ENCODE measurements at regions of chr2 and their contacts with region 1.

Region 1: DNA sequence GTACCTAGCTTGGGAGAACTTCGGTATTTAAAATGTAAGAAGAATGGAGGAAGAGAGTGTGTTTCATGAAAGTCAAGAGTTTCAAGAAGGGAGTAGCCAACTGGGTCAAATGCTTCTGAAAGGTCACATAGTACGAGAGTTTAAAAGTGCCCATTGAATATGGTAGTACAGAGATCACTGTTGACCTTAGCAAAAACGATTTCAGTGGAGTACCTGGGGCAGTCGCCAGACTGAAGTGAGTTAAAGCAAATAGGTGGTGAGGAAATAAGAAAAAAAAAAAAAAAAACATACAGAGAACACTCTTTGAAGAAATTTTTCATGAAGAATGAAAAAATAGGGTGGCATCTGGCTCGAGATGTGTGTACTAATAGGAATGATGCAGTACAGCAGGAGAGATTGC is 11.5 kb downstream of the LIPT1 start:
- DNase-seq: no peak
- ATAC-seq: no peak
- H3K4me3 ChIP-seq: no peak overlapping the region
- H3K4me3 Mint-ChIP-seq: no peak overlapping the region
- H3K27ac ChIP-seq: no peak overlapping the region
- H3K27ac Mint-ChIP-seq: peak overlapping the region in 5 of 9 donors; percentile 4 to 77 (median 37)
- H3K4me1 ChIP-seq: no peaks in the 10 kb centered on the region
- H3K4me1 Mint-ChIP-seq: peaks cover 1 to 11% (median 7%) of the 10 kb centered on the region in 7 donors
- H3K27me3 ChIP-seq: no peaks in the 10 kb centered on the region
- H3K27me3 Mint-ChIP-seq: no peaks in the 10 kb centered on the region

Region 2: GRCh38 chr2:99154643-99155536 is 11.3 kb before region 1 on chr2 and contains the starts of genes LIPT1 and TSGA10:
- CTCF ChIA-PET with region 1: no interaction called
- POLR2A ChIA-PET with region 1: interaction called, 10 read pairs
- intact Hi-C with region 1: loop called in 1 of 2 experiments (anchors 1 kb)
- DNase-seq: peak; percentile 80 to 95 (median 92)
- ATAC-seq: peak; percentile 98
- H3K4me3 ChIP-seq: peak within 1 kb of the TSS; percentile 83
- H3K4me3 Mint-ChIP-seq: peak within 1 kb of the TSS in 1 of 10 donors; percentile 93
- H3K27ac ChIP-seq: peak within 1 kb of the TSS; percentile 92
- H3K27ac Mint-ChIP-seq: peak within 1 kb of the TSS in 2 of 9 donors; percentile 96 to 97
- H3K4me1 ChIP-seq: peaks cover 15 to 18% of the 10 kb centered on the region in 2 donors
- H3K4me1 Mint-ChIP-seq: peaks cover 25 to 57% (median 42%) of the 10 kb centered on the region in 7 donors
- H3K27me3 ChIP-seq: no peaks in the 10 kb centered on the region
- H3K27me3 Mint-ChIP-seq: no peaks in the 10 kb centered on the region
- total RNA-seq, gene LIPT1: 7.7 to 24.1 (median 15.9) TPM
- total RNA-seq, gene TSGA10: 3.5 to 31.7 (median 12.6) TPM